ENCODE measurements at regions of chr5 and their contacts with region 1.

Region 1: DNA sequence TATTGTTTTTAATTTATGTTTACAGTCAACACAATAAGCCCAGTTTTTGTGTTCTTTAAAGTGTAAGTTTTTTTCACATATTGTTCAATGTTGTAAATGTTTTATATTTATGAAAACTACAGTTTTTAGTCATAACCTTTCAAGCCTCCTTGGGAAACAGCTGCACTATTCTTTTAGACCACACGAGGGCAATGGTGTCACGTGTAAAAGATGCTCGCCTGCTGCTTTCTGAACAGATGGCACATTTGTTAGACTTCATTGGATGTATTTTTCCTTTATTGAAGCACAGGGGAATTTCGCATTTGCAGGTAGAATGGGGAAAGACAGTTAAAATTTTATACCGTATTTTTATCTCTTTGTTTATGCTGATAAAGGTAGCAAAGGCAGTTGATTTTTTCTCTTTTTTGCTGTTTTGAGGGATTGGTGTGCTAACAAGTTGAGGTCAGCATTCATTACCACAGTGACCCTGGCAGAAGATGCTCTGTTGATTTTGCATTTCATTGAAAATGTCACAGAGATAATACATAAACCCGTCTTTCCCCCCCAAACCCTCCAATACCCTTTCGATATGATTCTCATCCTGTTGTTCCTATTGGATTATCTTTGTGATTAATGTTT is 59.0 kb downstream of the MAT2B start:
- DNase-seq: no peak
- H3K4me3 ChIP-seq: no peak overlapping the region
- H3K27ac ChIP-seq: no peak overlapping the region
- H3K4me1 ChIP-seq: peaks cover 23% of the 10 kb centered on the region
- H3K27me3 ChIP-seq: peaks cover 58% of the 10 kb centered on the region
- CTCF ChIP-seq: peak; percentile 93

Region 2: GRCh38 chr5:163498886-163499285 is 65.5 kb before region 1 on chr5:
- intact Hi-C with region 1: no loop called
- DNase-seq: no peak
- H3K4me3 ChIP-seq: no peak overlapping the region
- H3K27ac ChIP-seq: no peak overlapping the region
- H3K4me1 ChIP-seq: peaks cover 18% of the 10 kb centered on the region
- H3K27me3 ChIP-seq: no peaks in the 10 kb centered on the region
- CTCF ChIP-seq: no peak

Region 3: GRCh38 chr5:163534492-163535094 is 29.8 kb before region 1 on chr5:
- intact Hi-C with region 1: no loop called
- DNase-seq: no peak
- H3K4me3 ChIP-seq: no peak overlapping the region
- H3K27ac ChIP-seq: peak overlapping the region; percentile 64
- H3K4me1 ChIP-seq: peaks cover 23% of the 10 kb centered on the region
- H3K27me3 ChIP-seq: no peaks in the 10 kb centered on the region
- CTCF ChIP-seq: no peak

Region 4: DNA sequence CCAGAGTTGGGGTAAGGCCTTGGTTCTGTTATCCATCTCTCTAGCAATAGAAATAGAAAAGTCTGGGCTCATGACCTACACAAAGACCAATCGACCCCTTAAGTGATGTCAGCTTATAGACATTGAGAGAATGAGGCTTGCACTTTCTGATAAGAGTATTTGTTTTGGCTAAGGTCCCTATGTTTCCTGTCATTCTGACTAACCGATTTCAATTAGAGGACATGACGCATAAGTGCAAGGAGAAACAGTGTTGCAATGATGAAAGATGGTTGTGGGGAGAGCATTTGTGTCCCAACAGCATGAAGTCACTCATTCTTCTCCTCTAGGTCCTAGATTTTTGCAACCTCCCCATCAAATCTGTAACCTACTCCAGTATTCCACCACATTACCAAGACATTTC is 196.1 kb after region 1 on chr5:
- intact Hi-C with region 1: no loop called
- DNase-seq: no peak
- H3K4me3 ChIP-seq: no peak overlapping the region
- H3K27ac ChIP-seq: no peak overlapping the region
- H3K4me1 ChIP-seq: no peaks in the 10 kb centered on the region
- H3K27me3 ChIP-seq: no peaks in the 10 kb centered on the region
- CTCF ChIP-seq: no peak

Region 5: GRCh38 chr5:164013077-164013670 is 448.7 kb after region 1 on chr5:
- intact Hi-C with region 1: no loop called
- DNase-seq: no peak
- H3K4me3 ChIP-seq: no peak overlapping the region
- H3K27ac ChIP-seq: no peak overlapping the region
- H3K4me1 ChIP-seq: no peaks in the 10 kb centered on the region
- H3K27me3 ChIP-seq: peaks cover 9% of the 10 kb centered on the region
- CTCF ChIP-seq: peak; percentile 73

Region 6: GRCh38 chr5:164504141-164504772 is 939.8 kb after region 1 on chr5:
- intact Hi-C with region 1: loop called (anchors 10 kb)
- DNase-seq: no peak
- H3K4me3 ChIP-seq: no peak overlapping the region
- H3K27ac ChIP-seq: no peak overlapping the region
- H3K4me1 ChIP-seq: no peaks in the 10 kb centered on the region
- H3K27me3 ChIP-seq: no peaks in the 10 kb centered on the region
- CTCF ChIP-seq: peak; percentile 82

Region 7: DNA sequence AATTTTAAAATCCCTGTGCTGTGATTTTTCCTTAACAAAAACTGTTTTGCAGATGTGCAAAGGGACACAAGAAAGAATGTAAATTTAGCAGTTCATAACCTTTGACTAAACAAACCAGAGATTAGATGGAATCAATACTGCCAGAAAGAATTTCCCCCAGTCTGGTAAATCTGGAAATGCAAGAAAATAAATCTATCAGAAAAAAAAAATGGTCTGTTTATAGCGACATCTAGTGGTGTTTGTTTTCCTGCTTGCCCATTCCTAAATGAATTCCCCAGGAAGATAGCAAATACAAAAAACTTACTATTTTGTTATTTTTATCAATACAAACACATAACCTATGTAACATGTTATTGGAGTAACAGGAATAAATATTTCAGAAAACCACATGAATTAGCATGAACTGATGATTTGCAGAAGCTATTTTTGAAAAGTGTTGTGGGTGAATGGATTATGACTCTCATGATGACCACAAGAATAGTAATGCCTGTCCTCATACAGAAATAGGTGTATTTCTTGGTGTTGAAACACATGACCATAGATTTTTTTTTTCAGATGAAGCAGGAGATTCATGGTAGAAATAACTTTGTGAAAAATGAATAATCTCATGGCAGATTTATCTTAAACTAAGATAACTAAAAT is 1644.8 kb after region 1 on chr5:
- intact Hi-C with region 1: loop called (anchors 10 kb)
- DNase-seq: no peak
- H3K4me3 ChIP-seq: no peak overlapping the region
- H3K27ac ChIP-seq: no peak overlapping the region
- H3K4me1 ChIP-seq: no peaks in the 10 kb centered on the region
- H3K27me3 ChIP-seq: no peaks in the 10 kb centered on the region
- CTCF ChIP-seq: peak; percentile 68

Measured in left ventricle myocardium inferior (tissue), 1 donor.